RWPE1 (cell line): ENCODE measurements at regions of chr7 and their contacts with region 1.

Region 1: DNA sequence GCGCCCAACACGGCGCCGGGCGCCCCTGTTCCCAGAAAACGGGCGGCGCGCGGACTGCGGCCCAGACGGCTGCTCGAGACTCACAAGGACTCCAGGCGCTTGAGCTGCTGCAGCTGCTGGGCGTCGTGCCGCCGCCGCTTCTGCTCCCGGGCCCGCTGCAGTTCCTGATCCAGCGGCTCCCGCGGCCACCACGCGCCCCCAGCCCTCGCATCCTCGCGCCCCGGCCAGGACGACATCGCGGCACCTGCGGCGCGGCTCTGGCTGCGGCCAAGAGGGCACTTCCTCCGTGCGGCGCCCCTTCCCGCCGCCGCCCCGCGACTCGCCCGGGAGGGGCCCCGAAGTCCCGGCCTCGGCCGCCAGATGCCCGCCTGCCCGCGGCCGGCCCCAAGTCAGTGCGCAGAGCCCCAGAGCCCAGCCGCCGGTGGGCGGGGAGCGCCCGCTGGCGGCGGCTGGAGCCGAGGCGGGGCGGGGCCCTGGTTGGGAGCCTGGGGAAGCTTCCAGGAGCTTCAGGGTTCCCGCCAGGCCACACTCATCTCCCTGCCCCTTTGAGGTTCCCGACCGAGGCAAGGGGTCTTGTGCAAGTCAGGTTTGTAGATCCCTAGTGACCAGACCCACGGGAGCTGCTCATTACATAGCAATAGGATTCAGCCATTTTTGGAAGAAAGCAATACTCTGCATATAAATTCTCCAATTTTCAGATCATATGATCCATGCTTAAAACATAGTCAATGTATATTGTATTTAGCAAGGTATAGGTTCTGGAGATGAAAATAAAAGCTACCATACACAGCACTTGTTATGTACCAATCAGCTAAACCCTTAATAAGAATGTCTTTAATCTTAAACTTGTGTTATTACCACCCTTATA is 14.2 kb upstream of the FKBP9 start:
- DNase-seq: peak; percentile 87
- H3K27ac ChIP-seq: peak overlapping the region; percentile 97
- CTCF ChIP-seq: peak; percentile 92

Region 2: GRCh38 chr7:32616625-32617024 is 326.4 kb before region 1 on chr7:
- CTCF ChIA-PET with region 1: no interaction called
- POLR2A ChIA-PET with region 1: no interaction called
- DNase-seq: peak; percentile 61
- H3K27ac ChIP-seq: no peak overlapping the region; the same call in 1 of the 2 replicates
- CTCF ChIP-seq: no peak

Region 3: DNA sequence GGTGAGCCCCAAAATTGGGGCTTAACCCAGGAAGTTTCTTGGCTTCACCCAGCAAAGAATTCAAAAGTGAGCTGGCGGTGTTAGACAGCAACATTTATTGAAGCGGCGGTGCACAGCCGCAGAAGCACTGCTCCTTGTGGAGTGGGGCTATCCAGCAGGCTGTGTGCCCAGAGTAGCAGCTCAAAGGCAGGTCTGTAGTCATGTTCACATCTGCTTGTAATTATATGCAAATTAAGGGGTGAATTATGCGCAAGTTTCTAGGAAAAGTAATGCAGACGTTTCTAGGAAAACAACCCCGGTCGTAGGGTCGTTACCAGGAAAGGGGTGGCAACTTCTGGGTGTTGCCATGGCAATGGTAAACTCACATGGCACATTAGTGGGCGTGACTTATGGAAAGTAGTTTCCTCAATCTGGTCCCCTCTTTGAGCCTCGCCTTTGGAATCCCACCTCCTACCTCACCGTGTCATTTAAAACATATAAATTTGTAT is 37.8 kb before region 1 on chr7:
- CTCF ChIA-PET with region 1: no interaction called
- POLR2A ChIA-PET with region 1: interaction called, 13 read pairs
- DNase-seq: peak; percentile 63
- H3K27ac ChIP-seq: peak overlapping the region; percentile 66
- CTCF ChIP-seq: no peak

Region 4: GRCh38 chr7:32957326-32958045 is 14.5 kb after region 1 on chr7 and contains the start of gene FKBP9:
- CTCF ChIA-PET with region 1: interaction called, 7 read pairs
- POLR2A ChIA-PET with region 1: interaction called, 11 read pairs
- DNase-seq: peak; percentile 97
- H3K27ac ChIP-seq: peak within 1 kb of the TSS; percentile 96
- CTCF ChIP-seq: no peak